Ascending aorta (tissue), 2 donors: ENCODE measurements at regions of chr14 and their contacts with region 1.

Region 1: GRCh38 chr14:69153131-69153872 is 383 bp upstream of the DCAF5 start:
- DNase-seq: peak; percentile 65 to 97
- H3K4me3 ChIP-seq: peak overlapping the region; percentile 78 to 92
- H3K27ac ChIP-seq: peak overlapping the region; percentile 97 to 98
- H3K4me1 ChIP-seq: peaks cover 0 to 6% of the 10 kb centered on the region in 2 donors
- H3K27me3 ChIP-seq: no peaks in the 10 kb centered on the region
- CTCF ChIP-seq: peak in 1 of 3 experiments; percentile 27

Region 2: DNA sequence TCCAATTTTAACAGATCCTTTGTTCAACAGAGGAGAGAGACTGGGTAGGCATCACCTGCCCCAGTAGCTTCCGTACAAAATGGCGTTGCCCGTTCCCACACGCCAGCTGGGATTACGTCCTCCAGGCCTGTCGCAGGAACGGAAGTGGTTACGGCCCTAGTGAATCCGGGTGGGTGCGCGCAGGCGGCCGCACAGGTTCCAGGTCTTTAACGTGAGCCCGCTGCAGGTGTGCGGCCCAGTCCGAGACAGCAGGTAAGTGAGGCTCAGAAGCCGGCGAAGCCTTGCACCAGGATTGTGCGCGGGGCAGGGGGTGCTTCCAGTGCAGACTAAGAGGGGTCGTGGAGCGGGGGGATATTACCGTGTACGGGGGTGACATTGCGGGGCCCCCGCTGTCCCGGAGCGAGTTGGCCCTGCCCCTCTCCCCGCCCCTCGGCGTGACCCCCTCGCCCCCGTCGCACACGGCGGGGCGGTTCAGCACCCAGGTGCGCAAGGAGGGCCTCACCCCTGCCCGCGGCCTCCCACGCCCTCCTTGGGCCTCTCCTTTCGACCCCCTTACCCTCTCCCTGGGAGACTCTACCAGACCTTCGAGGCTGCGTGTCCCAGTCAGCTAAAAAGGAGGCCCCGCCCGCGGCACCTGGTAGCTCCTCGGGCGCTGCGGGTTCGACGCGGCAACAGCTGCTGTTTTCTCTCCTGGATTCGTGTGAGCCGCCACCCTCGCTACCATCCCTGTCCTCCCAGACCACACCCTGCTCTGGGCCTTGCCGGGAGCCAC is 38.2 kb after region 1 on chr14 and contains the start of gene EXD2:
- intact Hi-C with region 1: loop called (anchors 1 kb)
- DNase-seq: peak; percentile 24 to 90
- H3K4me3 ChIP-seq: peak within 1 kb of the TSS; percentile 73 to 92
- H3K27ac ChIP-seq: peak within 1 kb of the TSS; percentile 37 to 39
- H3K4me1 ChIP-seq: no peaks in the 10 kb centered on the region
- H3K27me3 ChIP-seq: no peaks in the 10 kb centered on the region
- CTCF ChIP-seq: no peak
- total RNA-seq, gene EXD2: 17.2 TPM

Region 3: GRCh38 chr14:69299286-69300035 is 146.2 kb after region 1 on chr14:
- intact Hi-C with region 1: no loop called
- DNase-seq: peak in 1 of 2 donors; percentile 43
- H3K4me3 ChIP-seq: no peak overlapping the region
- H3K27ac ChIP-seq: no peak overlapping the region
- H3K4me1 ChIP-seq: peaks cover 0 to 10% of the 10 kb centered on the region in 2 donors
- H3K27me3 ChIP-seq: no peaks in the 10 kb centered on the region
- CTCF ChIP-seq: no peak